Caco-2 (cell line): ENCODE measurements at regions of chr5 and their contacts with region 1.

Region 1: DNA sequence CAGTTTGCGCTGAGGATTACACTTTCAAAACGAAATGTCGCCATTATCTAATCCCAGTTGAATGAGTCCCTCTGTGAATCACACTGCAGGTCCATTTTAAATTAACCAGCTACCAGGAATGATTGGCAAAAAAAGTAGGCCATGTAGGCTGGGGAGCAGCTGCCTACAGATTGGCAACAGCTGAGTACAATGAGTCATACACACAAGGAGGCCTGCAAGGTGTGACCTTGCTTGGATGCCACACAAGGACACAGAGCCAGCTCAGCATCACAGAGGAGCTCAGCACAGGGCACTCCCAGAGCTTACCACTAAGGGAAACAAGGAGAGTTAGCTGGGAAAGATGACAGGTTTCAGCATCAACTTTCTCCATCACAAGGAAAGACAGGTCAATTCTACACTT is 12.9 kb downstream of the HAVCR1 start:
- DNase-seq: peak; percentile 71 to 91
- H3K4me3 ChIP-seq: no peak overlapping the region
- H3K4me3 Mint-ChIP-seq: peak overlapping the region; percentile 8
- H3K27ac Mint-ChIP-seq: peak overlapping the region; percentile 86
- H3K4me1 ChIP-seq: peaks cover 70% of the 10 kb centered on the region
- H3K4me1 Mint-ChIP-seq: peaks cover 52% of the 10 kb centered on the region
- H3K27me3 ChIP-seq: no peaks in the 10 kb centered on the region
- H3K27me3 Mint-ChIP-seq: no peaks in the 10 kb centered on the region
- CTCF ChIP-seq: no peak

Region 2: GRCh38 chr5:157059093-157059539 is 13.1 kb after region 1 on chr5 and contains the start of gene HAVCR1:
- CTCF ChIA-PET with region 1: interaction called, 6 read pairs
- POLR2A ChIA-PET with region 1: interaction called, 15 read pairs
- intact Hi-C with region 1: loop called (anchors 1 kb)
- DNase-seq: peak; percentile 65 to 70
- H3K4me3 ChIP-seq: peak within 1 kb of the TSS; percentile 39
- H3K4me3 Mint-ChIP-seq: peak within 1 kb of the TSS; percentile 83
- H3K27ac Mint-ChIP-seq: peak within 1 kb of the TSS; percentile 94
- H3K4me1 ChIP-seq: peaks cover 44% of the 10 kb centered on the region
- H3K4me1 Mint-ChIP-seq: peaks cover 40% of the 10 kb centered on the region
- H3K27me3 ChIP-seq: no peaks in the 10 kb centered on the region
- H3K27me3 Mint-ChIP-seq: no peaks in the 10 kb centered on the region
- CTCF ChIP-seq: no peak
- total RNA-seq, gene HAVCR1: 135 and 144 TPM in 2 replicates

Region 3: GRCh38 chr5:157390551-157391297 is 344.7 kb after region 1 on chr5:
- CTCF ChIA-PET with region 1: no interaction called
- POLR2A ChIA-PET with region 1: no interaction called
- intact Hi-C with region 1: no loop called
- DNase-seq: peak; percentile 68 to 79
- H3K4me3 ChIP-seq: no peak overlapping the region
- H3K4me3 Mint-ChIP-seq: no peak overlapping the region
- H3K27ac Mint-ChIP-seq: peak overlapping the region; percentile 45
- H3K4me1 ChIP-seq: peaks cover 23% of the 10 kb centered on the region
- H3K4me1 Mint-ChIP-seq: peaks cover 22% of the 10 kb centered on the region
- H3K27me3 ChIP-seq: no peaks in the 10 kb centered on the region
- H3K27me3 Mint-ChIP-seq: no peaks in the 10 kb centered on the region
- CTCF ChIP-seq: no peak